H1 (cell line): ENCODE measurements at regions of chr5 and their contacts with region 1.

Region 1: GRCh38 chr5:138536665-138537315 is 6.2 kb downstream of the ETF1 start:
- DNase-seq: peak in 1 of 2 experiments; percentile 43
- H3K4me3 ChIP-seq: no peak overlapping the region
- H3K27ac ChIP-seq: no peak overlapping the region
- H3K4me1 ChIP-seq: peaks cover 0 to 7% (median 0%) of the 10 kb centered on the region in 4 experiments; a peak in 2 of 7 replicates
- H3K27me3 ChIP-seq: no peaks in the 10 kb centered on the region
- CTCF ChIP-seq: peak; percentile 18 to 62 (median 41)
- EP300 ChIP-seq: no peak
- POLR2A ChIP-seq: peak in 1 of 2 experiments; percentile 74; a peak in 1 of 3 replicates
- RAD21 ChIP-seq: no peak

Region 2: DNA sequence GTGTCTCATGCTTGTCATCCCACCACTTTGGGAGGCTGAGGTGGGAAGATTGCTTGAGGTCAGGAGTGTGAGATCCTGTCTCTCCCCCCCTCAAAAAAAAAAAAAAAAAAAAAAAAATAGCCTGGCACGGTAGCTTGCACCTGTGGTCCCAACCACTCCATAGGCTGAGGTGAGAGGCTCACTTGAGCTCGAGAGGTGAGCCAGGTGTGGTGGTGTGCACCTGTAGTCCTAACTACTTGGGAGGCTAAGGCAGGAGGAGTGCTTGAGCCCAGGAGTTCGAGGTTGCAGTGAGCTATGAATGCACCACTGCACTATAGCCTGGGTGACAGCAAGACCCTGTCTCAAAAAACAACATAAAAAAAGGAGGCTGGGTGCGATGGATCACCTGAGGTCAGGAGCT is 15.9 kb after region 1 on chr5:
- CTCF ChIA-PET with region 1: interaction called, 6 read pairs
- POLR2A ChIA-PET with region 1: interaction called, 1,018 read pairs
- DNase-seq: no peak
- H3K4me3 ChIP-seq: no peak overlapping the region
- H3K27ac ChIP-seq: no peak overlapping the region
- H3K4me1 ChIP-seq: no peaks in the 10 kb centered on the region
- H3K27me3 ChIP-seq: no peaks in the 10 kb centered on the region
- CTCF ChIP-seq: no peak
- EP300 ChIP-seq: no peak
- POLR2A ChIP-seq: no peak
- RAD21 ChIP-seq: no peak

Region 3: DNA sequence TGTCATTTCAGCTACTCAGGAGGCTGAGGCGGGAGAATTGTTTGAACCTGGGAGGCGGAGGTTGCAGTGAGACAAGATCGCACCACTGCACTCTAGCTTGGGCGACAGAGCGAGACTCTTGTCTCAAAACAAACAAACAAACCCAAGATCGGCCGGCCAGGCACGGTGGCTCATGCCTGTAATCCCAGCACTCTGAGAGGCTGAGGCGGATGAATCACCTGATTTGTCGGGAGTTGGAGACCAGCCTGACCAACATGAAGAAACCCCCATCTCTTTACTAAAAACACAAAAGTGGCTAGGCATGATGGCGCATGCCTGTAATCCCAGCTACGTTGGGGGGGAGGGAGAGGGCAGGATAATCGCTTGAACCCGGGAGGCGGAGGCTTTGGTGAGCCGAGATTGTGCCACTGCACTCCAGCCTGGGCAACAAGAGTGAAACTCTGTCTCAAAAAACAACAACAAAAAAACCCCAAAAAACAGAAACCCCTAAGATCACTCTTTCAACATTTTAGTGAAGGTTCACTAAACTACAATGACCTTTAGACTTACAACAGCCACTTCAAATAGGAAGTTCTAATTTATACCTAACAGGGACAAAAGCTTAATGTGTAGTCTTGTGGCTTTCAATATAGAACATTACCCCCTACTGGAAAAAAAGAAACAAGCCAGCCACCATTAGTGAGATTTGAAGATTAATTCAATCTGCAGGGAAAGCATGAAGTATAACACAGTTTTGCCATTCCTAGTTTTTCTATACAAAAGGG is 31.5 kb after region 1 on chr5:
- CTCF ChIA-PET with region 1: interaction called, 3 read pairs
- POLR2A ChIA-PET with region 1: interaction called, 1,018 read pairs
- DNase-seq: no peak
- H3K4me3 ChIP-seq: no peak overlapping the region
- H3K27ac ChIP-seq: no peak overlapping the region
- H3K4me1 ChIP-seq: no peaks in the 10 kb centered on the region; a peak in 1 of 7 replicates
- H3K27me3 ChIP-seq: no peaks in the 10 kb centered on the region
- CTCF ChIP-seq: no peak
- EP300 ChIP-seq: no peak
- POLR2A ChIP-seq: 0 out of 3 replicates have a peak, but pooled peaks of 1 of the 2 experiments have one; percentile 24
- RAD21 ChIP-seq: no peak

Region 4: GRCh38 chr5:138583984-138584637 is 47.3 kb after region 1 on chr5:
- CTCF ChIA-PET with region 1: no interaction called
- POLR2A ChIA-PET with region 1: no interaction called
- DNase-seq: no peak
- H3K4me3 ChIP-seq: no peak overlapping the region
- H3K27ac ChIP-seq: no peak overlapping the region
- H3K4me1 ChIP-seq: no peaks in the 10 kb centered on the region
- H3K27me3 ChIP-seq: no peaks in the 10 kb centered on the region
- CTCF ChIP-seq: no peak
- EP300 ChIP-seq: no peak
- POLR2A ChIP-seq: no peak
- RAD21 ChIP-seq: no peak

Region 5: DNA sequence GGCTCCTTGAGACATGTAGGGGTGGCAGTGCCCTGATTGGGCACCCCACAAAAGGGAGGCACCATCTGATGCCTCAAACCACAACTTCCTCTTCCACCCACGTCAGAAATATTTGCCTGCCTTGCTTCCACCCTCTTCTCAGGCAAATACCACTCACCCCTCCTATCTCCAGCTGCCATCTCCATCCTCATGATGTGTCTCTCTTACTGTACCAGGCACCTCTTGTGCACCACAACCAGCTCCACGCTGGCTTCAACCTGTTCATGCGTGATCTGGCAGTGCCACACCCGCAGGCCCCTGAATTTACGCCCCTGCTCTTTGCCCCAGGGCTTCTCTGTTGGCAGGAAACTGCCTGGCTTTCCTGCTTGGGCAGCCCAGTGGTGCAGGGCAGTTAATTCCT is 126.2 kb after region 1 on chr5:
- CTCF ChIA-PET with region 1: no interaction called
- POLR2A ChIA-PET with region 1: no interaction called
- DNase-seq: no peak
- H3K4me3 ChIP-seq: no peak overlapping the region
- H3K27ac ChIP-seq: no peak overlapping the region
- H3K4me1 ChIP-seq: peaks cover 0 to 5% (median 2%) of the 10 kb centered on the region in 4 experiments; a peak in 3 of 7 replicates
- H3K27me3 ChIP-seq: no peaks in the 10 kb centered on the region; a peak in 1 of 7 replicates
- CTCF ChIP-seq: no peak
- EP300 ChIP-seq: no peak
- POLR2A ChIP-seq: no peak
- RAD21 ChIP-seq: no peak